Tibial artery (tissue), 4 donors: ENCODE measurements at regions of chr1 and their contacts with region 1.

Region 1: GRCh38 chr1:176338877-176339276 is 124.1 kb upstream of the PAPPA2 start:
- DNase-seq: no peak
- H3K4me3 ChIP-seq: no peak overlapping the region
- H3K27ac ChIP-seq: no peak overlapping the region
- H3K4me1 ChIP-seq: no peaks in the 10 kb centered on the region
- H3K27me3 ChIP-seq: no peaks in the 10 kb centered on the region
- CTCF ChIP-seq: no peak

Region 2: DNA sequence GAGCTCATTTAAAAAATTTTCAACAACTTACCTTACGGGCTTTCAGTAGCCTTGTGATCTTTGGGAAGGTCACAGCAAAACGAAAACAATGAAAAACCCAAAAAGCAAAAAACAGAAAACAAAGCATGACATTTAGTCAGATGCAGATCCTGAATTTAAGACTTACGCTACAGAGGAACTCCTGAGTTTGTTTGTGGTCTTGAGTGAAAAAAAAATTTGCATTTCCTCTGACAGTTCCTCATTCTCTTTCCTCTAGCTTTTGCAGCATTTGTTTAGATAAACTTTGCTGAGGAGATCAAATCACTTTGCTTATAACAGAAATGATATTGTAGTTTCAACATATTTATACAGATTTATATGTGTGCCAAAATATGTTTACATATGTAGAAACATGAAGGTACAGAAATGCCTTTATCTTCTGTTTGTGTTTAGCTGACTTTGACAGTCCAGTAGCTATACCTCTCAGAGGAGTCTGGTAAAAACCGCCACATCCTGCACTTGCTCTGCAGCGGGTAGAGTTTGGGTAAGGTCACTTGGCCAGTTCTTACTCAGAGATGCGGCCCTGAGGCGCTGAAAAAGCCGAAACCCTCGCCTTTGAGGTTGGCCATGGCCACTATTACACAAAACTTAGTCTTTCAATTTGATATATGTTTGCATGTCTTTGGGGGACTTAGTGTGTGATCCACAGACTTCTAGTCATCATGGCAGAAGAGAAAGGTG is 738.0 kb before region 1 on chr1:
- intact Hi-C with region 1: loop called (anchors 5 kb)
- DNase-seq: no peak
- H3K4me3 ChIP-seq: no peak overlapping the region
- H3K27ac ChIP-seq: no peak overlapping the region
- H3K4me1 ChIP-seq: no peaks in the 10 kb centered on the region
- H3K27me3 ChIP-seq: peaks cover 0 to 12% of the 10 kb centered on the region in 2 donors
- CTCF ChIP-seq: no peak